ENCODE measurements at regions of chr17 and their contacts with region 1.

Region 1: DNA sequence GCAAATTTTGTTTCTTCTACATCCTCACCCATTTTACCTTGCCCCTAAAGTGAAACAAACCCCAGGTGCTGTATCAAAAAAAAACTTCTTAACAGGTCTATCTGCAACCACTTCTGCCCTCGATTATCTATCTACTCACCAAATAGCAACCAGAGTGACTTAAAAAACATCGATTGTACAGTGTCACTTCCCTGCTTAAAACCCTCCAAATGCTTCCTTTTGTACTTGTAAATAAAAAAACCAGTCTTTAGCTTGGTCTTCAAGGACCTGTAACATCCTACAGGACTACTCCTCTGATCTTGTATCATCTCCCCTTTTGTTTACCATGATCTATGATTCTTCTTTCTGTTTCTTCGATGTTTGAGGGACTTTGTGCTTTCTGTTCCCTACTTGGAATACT is 82.7 kb upstream of the CORO6 start:
- DNase-seq: peak in 2 of 10 donors; percentile 32 to 43
- ATAC-seq: peak in 1 of 2 donors; percentile 31
- H3K4me3 Mint-ChIP-seq: peak overlapping the region; percentile 48 to 89 (median 74)
- H3K27ac Mint-ChIP-seq: peak overlapping the region; percentile 88 to 99 (median 98)
- H3K4me1 Mint-ChIP-seq: peaks cover 13 to 71% (median 49%) of the 10 kb centered on the region in 4 donors
- H3K27me3 Mint-ChIP-seq: no peaks in the 10 kb centered on the region

Region 2: GRCh38 chr17:29597361-29598172 is 107.8 kb before region 1 on chr17:
- POLR2A ChIA-PET with region 1: no interaction called
- DNase-seq: no peak
- ATAC-seq: no peak
- H3K4me3 Mint-ChIP-seq: no peak overlapping the region
- H3K27ac Mint-ChIP-seq: no peak overlapping the region
- H3K4me1 Mint-ChIP-seq: peaks cover 0 to 13% (median 9%) of the 10 kb centered on the region in 4 donors
- H3K27me3 Mint-ChIP-seq: peaks cover 0 to 2% (median 0%) of the 10 kb centered on the region in 5 donors

Region 3: DNA sequence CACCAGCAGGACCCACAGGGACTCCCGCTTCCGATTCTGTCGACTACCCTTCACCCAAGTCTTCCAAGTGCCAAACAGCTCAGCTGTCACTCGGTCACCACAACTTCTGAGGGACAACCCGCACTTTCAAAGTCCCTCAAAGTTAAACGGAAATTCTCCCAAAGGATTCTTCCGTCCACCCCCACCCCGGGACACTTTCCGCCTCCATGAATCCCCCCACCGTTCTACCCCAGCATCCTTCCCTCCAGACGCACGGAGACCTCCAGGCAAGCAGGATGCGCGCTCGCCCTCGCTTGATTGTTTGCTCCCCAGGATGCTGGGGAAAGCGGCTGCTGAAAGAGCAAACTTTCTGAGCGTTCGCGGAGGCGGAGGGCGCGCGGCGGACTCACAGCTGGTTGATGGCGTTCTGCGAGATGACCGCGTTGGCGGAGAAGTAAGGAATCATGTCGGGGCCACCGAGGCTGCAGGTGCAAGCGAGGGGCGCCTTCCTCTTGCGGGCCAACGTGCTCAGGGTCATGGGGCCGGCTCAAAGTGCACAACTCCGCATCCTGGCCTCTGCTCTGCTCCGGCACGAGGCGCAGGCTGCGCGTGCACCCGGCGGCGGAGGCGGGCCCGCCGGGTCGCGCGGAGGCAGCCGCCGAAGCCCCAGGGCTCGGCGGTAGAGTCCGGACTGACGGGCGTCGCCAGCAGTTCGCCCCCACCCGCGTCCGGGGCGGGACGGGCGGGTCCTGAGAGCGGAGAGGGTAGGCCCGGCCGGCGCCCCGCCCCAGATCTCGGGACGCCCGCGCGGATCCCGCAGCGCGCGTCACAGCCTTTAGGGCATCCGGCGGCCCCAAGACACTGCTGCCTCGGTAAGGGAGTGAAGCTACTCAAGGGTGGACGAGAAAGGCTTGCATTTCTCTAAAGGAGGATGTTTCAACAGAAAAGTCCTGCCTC is 55.6 kb after region 1 on chr17:
- POLR2A ChIA-PET with region 1: interaction called, 66 read pairs
- DNase-seq: peak; percentile 85 to 95 (median 92)
- ATAC-seq: peak; percentile 78 to 87
- H3K4me3 Mint-ChIP-seq: peak overlapping the region; percentile 91 to 100 (median 97)
- H3K27ac Mint-ChIP-seq: peak overlapping the region; percentile 91 to 100 (median 96)
- H3K4me1 Mint-ChIP-seq: peaks cover 9 to 48% (median 40%) of the 10 kb centered on the region in 4 donors
- H3K27me3 Mint-ChIP-seq: no peaks in the 10 kb centered on the region